CD4-positive, alpha-beta T cell (primary cell): ENCODE measurements at regions of chr9 and their contacts with region 1.

Region 1: DNA sequence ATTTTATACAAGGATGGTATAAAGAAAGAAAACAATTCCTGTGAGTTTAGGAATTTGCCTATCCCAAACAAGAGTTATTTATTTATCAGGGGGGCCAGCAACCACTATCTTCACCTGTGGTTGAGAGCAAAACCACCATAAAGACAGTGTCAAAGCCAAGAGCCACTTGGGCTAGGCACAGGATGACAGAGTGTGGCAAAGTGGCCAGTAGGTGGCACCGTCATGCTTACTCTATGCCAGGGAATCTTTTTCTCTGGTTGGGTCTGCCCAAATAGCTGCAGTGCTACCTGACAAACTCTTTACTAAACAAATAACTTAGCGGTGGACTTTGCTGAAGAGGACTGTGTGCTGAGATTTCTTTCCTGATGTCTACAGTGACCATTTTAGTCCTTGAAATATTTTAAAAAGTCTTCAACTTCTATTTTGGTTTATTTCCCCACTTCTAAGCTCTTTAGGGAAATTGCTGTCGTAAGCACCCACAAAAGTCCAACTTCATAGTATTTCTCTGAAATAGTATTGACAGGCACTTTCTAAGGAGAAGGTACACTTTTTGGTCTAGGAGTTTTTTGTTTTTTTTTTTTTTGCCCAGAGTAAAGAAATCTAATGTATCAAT is 285.0 kb downstream of the RFX3 start:
- DNase-seq: peak; percentile 33 to 74 (median 46)
- ATAC-seq: peak; percentile 65
- H3K4me3 ChIP-seq: no peak overlapping the region
- H3K4me3 Mint-ChIP-seq: no peak overlapping the region
- H3K27ac ChIP-seq: no peak overlapping the region
- H3K27ac Mint-ChIP-seq: no peak overlapping the region
- H3K4me1 ChIP-seq: no peaks in the 10 kb centered on the region
- H3K4me1 Mint-ChIP-seq: no peaks in the 10 kb centered on the region
- H3K27me3 ChIP-seq: no peaks in the 10 kb centered on the region
- H3K27me3 Mint-ChIP-seq: no peaks in the 10 kb centered on the region
- CTCF ChIP-seq: peak; percentile 70

Region 2: DNA sequence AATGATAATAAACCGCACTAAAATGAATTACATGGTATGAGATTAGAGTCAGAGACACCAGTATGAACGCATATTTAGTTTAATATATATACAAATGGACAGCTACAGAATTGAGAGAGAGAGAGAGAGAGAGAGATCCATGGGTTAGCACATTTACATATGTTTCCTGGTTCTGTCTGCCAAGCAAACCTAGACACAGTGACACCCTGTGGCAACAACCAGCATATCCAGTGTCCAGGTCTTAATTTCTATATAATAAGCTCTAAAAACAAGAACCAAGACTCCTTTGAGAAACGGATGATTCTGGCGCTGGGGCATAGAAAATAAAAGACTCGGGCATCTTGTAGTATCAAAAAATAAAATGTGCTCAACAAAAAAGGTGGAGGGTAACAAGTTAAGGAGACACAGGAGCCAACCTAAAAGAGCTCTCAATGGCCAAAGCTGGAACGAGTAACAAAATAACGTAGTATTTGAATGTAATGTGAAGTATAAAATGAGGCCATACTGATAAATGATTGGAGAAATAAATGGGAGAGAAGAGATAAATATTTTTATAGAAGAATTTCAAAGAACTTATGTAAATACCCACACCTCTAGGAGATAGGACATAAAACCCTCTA is 200.5 kb after region 1 on chr9:
- CTCF ChIA-PET with region 1: interaction called, 7 read pairs
- POLR2A ChIA-PET with region 1: no interaction called
- intact Hi-C with region 1: loop called (anchors 1 to 5 kb)
- DNase-seq: peak in 13 of 14 experiments; percentile 7 to 72 (median 29)
- ATAC-seq: peak; percentile 88
- H3K4me3 ChIP-seq: no peak overlapping the region
- H3K4me3 Mint-ChIP-seq: no peak overlapping the region
- H3K27ac ChIP-seq: no peak overlapping the region
- H3K27ac Mint-ChIP-seq: no peak overlapping the region
- H3K4me1 ChIP-seq: no peaks in the 10 kb centered on the region
- H3K4me1 Mint-ChIP-seq: peaks cover 12% of the 10 kb centered on the region
- H3K27me3 ChIP-seq: no peaks in the 10 kb centered on the region
- H3K27me3 Mint-ChIP-seq: no peaks in the 10 kb centered on the region
- CTCF ChIP-seq: peak; percentile 62

Region 3: GRCh38 chr9:3647652-3648051 is 406.9 kb after region 1 on chr9:
- CTCF ChIA-PET with region 1: no interaction called
- POLR2A ChIA-PET with region 1: no interaction called
- intact Hi-C with region 1: loop called in 1 of 2 experiments (anchors 5 kb)
- DNase-seq: peak in 3 of 14 experiments; percentile 6 to 17 (median 17)
- ATAC-seq: no peak
- H3K4me3 ChIP-seq: no peak overlapping the region
- H3K4me3 Mint-ChIP-seq: no peak overlapping the region
- H3K27ac ChIP-seq: no peak overlapping the region
- H3K27ac Mint-ChIP-seq: no peak overlapping the region
- H3K4me1 ChIP-seq: no peaks in the 10 kb centered on the region
- H3K4me1 Mint-ChIP-seq: no peaks in the 10 kb centered on the region
- H3K27me3 ChIP-seq: no peaks in the 10 kb centered on the region
- H3K27me3 Mint-ChIP-seq: no peaks in the 10 kb centered on the region
- CTCF ChIP-seq: peak; percentile 11

Region 4: GRCh38 chr9:4117835-4118610 is 877.3 kb after region 1 on chr9:
- CTCF ChIA-PET with region 1: interaction called, 3 read pairs
- POLR2A ChIA-PET with region 1: no interaction called
- intact Hi-C with region 1: loop called (anchors 5 kb)
- DNase-seq: peak; percentile 11 to 58 (median 28)
- ATAC-seq: no peak
- H3K4me3 ChIP-seq: no peak overlapping the region
- H3K4me3 Mint-ChIP-seq: no peak overlapping the region
- H3K27ac ChIP-seq: no peak overlapping the region
- H3K27ac Mint-ChIP-seq: no peak overlapping the region
- H3K4me1 ChIP-seq: no peaks in the 10 kb centered on the region
- H3K4me1 Mint-ChIP-seq: no peaks in the 10 kb centered on the region
- H3K27me3 ChIP-seq: no peaks in the 10 kb centered on the region
- H3K27me3 Mint-ChIP-seq: no peaks in the 10 kb centered on the region
- CTCF ChIP-seq: peak; percentile 48

Region 5: GRCh38 chr9:4339357-4339756 is 1098.6 kb after region 1 on chr9:
- CTCF ChIA-PET with region 1: no interaction called
- POLR2A ChIA-PET with region 1: no interaction called
- intact Hi-C with region 1: loop called in 1 of 2 experiments (anchors 2 kb)
- DNase-seq: peak; percentile 65 to 85 (median 75)
- ATAC-seq: peak; percentile 94
- H3K4me3 ChIP-seq: no peak overlapping the region
- H3K4me3 Mint-ChIP-seq: peak overlapping the region; percentile 26
- H3K27ac ChIP-seq: no peak overlapping the region
- H3K27ac Mint-ChIP-seq: peak overlapping the region; percentile 44
- H3K4me1 ChIP-seq: peaks cover 4% of the 10 kb centered on the region
- H3K4me1 Mint-ChIP-seq: peaks cover 7% of the 10 kb centered on the region
- H3K27me3 ChIP-seq: no peaks in the 10 kb centered on the region
- H3K27me3 Mint-ChIP-seq: no peaks in the 10 kb centered on the region
- CTCF ChIP-seq: peak; percentile 85

Region 6: GRCh38 chr9:4375424-4376200 is 1134.8 kb after region 1 on chr9:
- CTCF ChIA-PET with region 1: no interaction called
- POLR2A ChIA-PET with region 1: no interaction called
- intact Hi-C with region 1: loop called (anchors 1 to 10 kb)
- DNase-seq: peak in 3 of 14 experiments; percentile 14 to 45 (median 36)
- ATAC-seq: no peak
- H3K4me3 ChIP-seq: no peak overlapping the region
- H3K4me3 Mint-ChIP-seq: no peak overlapping the region
- H3K27ac ChIP-seq: no peak overlapping the region
- H3K27ac Mint-ChIP-seq: no peak overlapping the region
- H3K4me1 ChIP-seq: no peaks in the 10 kb centered on the region
- H3K4me1 Mint-ChIP-seq: no peaks in the 10 kb centered on the region
- H3K27me3 ChIP-seq: no peaks in the 10 kb centered on the region
- H3K27me3 Mint-ChIP-seq: peaks cover 15% of the 10 kb centered on the region
- CTCF ChIP-seq: no peak